GM12878 (cell line): ENCODE measurements at regions of chr13 and their contacts with region 1.

Region 1: GRCh38 chr13:31965361-31966066 is 66.1 kb upstream of the FRY start:
- DNase-seq: peak; percentile 84
- ATAC-seq: peak; percentile 94
- H3K4me3 ChIP-seq: no peak overlapping the region
- H3K27ac ChIP-seq: peak overlapping the region; percentile 41; the same call in 1 of the 2 replicates
- H3K4me1 ChIP-seq: peaks cover 16% of the 10 kb centered on the region
- H3K27me3 ChIP-seq: no peaks in the 10 kb centered on the region
- CTCF ChIP-seq: no peak
- EP300 ChIP-seq: peak; percentile 73 to 92; a peak in 3 of 4 replicates
- POLR2A ChIP-seq: no peak
- RAD21 ChIP-seq: 0 out of 2 replicates have a peak, but pooled peaks have one; percentile 5

Region 2: DNA sequence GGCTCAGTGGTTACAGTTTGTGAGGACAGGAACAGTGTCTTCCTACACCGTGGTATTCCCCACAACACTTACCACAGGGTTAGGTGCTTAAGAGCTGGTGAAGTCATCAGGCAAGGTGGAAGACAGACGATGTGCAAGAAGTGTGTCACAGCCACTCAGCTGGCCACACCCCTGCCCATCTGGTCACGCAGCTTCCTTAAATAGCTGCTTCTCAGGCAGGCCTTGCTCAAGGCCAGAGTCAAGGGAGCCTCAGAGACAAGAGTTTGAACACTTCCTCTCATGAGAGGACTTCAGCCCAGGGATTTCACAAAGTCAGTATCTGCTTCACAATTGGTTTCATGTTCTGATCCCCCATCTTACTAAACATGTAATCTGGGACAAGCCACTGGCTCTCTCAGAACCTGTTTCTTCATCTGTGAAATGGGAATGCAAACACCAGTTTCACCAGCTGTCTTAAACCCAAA is 14.3 kb before region 1 on chr13:
- CTCF ChIA-PET with region 1: interaction called, 14 read pairs
- POLR2A ChIA-PET with region 1: interaction called, 24 read pairs
- RAD21 ChIA-PET with region 1: interaction called, 27 read pairs
- SMC1A ChIA-PET with region 1: interaction called, 89 read pairs
- in situ Hi-C with region 1: no loop called
- intact Hi-C with region 1: no loop called
- DNase-seq: peak; percentile 89
- ATAC-seq: peak; percentile 96
- H3K4me3 ChIP-seq: no peak overlapping the region; the same call in 1 of the 2 replicates
- H3K27ac ChIP-seq: peak overlapping the region; percentile 63
- H3K4me1 ChIP-seq: peaks cover 22% of the 10 kb centered on the region
- H3K27me3 ChIP-seq: no peaks in the 10 kb centered on the region
- CTCF ChIP-seq: no peak
- EP300 ChIP-seq: peak; percentile 92 to 93; a peak in 2 of 4 replicates
- POLR2A ChIP-seq: peak; percentile 63
- RAD21 ChIP-seq: no peak

Region 3: GRCh38 chr13:32019612-32020233 is 54.2 kb after region 1 on chr13:
- CTCF ChIA-PET with region 1: no interaction called
- POLR2A ChIA-PET with region 1: no interaction called
- RAD21 ChIA-PET with region 1: no interaction called
- SMC1A ChIA-PET with region 1: no interaction called
- in situ Hi-C with region 1: loop called (anchors 5 kb)
- intact Hi-C with region 1: no loop called
- DNase-seq: peak; percentile 17
- ATAC-seq: peak; percentile 93
- H3K4me3 ChIP-seq: no peak overlapping the region
- H3K27ac ChIP-seq: no peak overlapping the region
- H3K4me1 ChIP-seq: no peaks in the 10 kb centered on the region; the same call in 1 of the 2 replicates
- H3K27me3 ChIP-seq: no peaks in the 10 kb centered on the region
- CTCF ChIP-seq: peak; percentile 63 to 77 (median 76)
- EP300 ChIP-seq: no peak
- POLR2A ChIP-seq: no peak
- RAD21 ChIP-seq: peak; percentile 89

Region 4: DNA sequence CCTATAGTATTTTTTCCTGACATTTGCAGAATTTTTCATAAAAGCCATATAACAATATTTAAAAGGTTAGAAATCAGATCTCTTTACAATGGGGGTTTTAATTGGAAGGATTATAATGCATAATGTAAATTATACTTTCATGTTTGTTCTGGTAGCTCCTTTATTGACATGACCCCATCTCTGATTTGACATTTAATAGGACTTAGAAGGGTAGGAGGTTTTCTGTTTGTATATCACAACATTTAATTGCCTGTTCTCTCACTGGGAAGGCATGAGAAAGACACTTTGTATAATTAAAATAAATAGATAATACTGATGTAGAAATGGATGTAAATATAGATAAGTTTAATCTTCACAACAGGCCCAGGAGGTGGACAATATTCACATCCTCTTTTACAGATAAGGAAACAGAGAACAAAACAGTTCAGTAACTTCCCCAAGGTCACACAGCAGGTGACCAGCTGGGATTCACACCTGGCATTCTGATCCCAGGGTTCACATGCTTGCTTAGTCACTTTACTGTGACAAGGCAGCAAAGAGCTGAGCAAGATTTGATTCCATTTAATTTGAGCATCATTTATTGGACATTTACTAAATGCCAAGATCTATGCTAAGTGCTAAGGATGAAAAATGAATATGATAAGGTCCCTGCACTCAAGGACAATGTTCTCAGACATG is 1413.9 kb after region 1 on chr13:
- CTCF ChIA-PET with region 1: no interaction called
- POLR2A ChIA-PET with region 1: no interaction called
- RAD21 ChIA-PET with region 1: no interaction called
- SMC1A ChIA-PET with region 1: no interaction called
- in situ Hi-C with region 1: no loop called
- intact Hi-C with region 1: no loop called
- DNase-seq: no peak
- ATAC-seq: no peak
- H3K4me3 ChIP-seq: no peak overlapping the region
- H3K27ac ChIP-seq: no peak overlapping the region
- H3K4me1 ChIP-seq: no peaks in the 10 kb centered on the region
- H3K27me3 ChIP-seq: no peaks in the 10 kb centered on the region
- CTCF ChIP-seq: no peak
- EP300 ChIP-seq: no peak
- POLR2A ChIP-seq: no peak
- RAD21 ChIP-seq: no peak

Region 5: GRCh38 chr13:33761740-33762139 is 1796.2 kb after region 1 on chr13:
- CTCF ChIA-PET with region 1: no interaction called
- POLR2A ChIA-PET with region 1: no interaction called
- RAD21 ChIA-PET with region 1: no interaction called
- SMC1A ChIA-PET with region 1: no interaction called
- in situ Hi-C with region 1: no loop called
- intact Hi-C with region 1: no loop called
- DNase-seq: no peak
- ATAC-seq: no peak
- H3K4me3 ChIP-seq: no peak overlapping the region
- H3K27ac ChIP-seq: no peak overlapping the region
- H3K4me1 ChIP-seq: peaks cover 15% of the 10 kb centered on the region
- H3K27me3 ChIP-seq: no peaks in the 10 kb centered on the region
- CTCF ChIP-seq: no peak
- EP300 ChIP-seq: no peak
- POLR2A ChIP-seq: no peak
- RAD21 ChIP-seq: no peak